A673 (cell line): ENCODE measurements at regions of chr4 and their contacts with region 1.

Region 1: DNA sequence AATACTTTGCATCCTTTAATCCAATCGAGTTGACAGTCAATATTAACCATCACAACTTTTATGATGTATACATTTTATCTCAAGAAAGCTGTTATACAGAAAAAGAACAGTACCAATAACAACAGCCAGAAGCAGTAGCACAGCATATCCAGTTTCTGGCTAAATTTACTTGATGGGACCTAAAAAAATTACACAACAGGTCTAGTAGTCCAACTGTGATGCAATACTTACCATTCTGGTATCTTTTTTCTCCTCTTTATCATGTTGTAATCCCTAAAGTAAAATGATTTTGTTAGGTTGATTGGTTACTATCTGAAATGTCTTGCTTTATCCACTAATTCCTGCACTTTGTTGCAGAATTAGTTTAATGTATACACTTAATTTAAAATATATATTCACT is 1150.6 kb downstream of the FAT4 start:
- DNase-seq: no peak
- H3K4me3 ChIP-seq: no peak overlapping the region
- H3K27ac ChIP-seq: peak overlapping the region; percentile 99
- H3K4me1 ChIP-seq: peaks cover 34% of the 10 kb centered on the region
- H3K27me3 ChIP-seq: no peaks in the 10 kb centered on the region
- CTCF ChIP-seq: no peak

Region 2: GRCh38 chr4:127000110-127000509 is 534.8 kb after region 1 on chr4:
- CTCF ChIA-PET with region 1: no interaction called
- POLR2A ChIA-PET with region 1: no interaction called
- intact Hi-C with region 1: loop called (anchors 5 kb)
- DNase-seq: no peak
- H3K4me3 ChIP-seq: no peak overlapping the region
- H3K27ac ChIP-seq: no peak overlapping the region
- H3K4me1 ChIP-seq: peaks cover 9% of the 10 kb centered on the region
- H3K27me3 ChIP-seq: no peaks in the 10 kb centered on the region
- CTCF ChIP-seq: no peak